HCT116 (cell line): ENCODE measurements at regions of chr1 and their contacts with region 1.

Region 1: GRCh38 chr1:218171285-218171893 is 113.7 kb upstream of the RRP15 start:
- DNase-seq: peak; percentile 24
- ATAC-seq: no peak
- H3K4me3 ChIP-seq: no peak overlapping the region
- H3K27ac ChIP-seq: no peak overlapping the region
- H3K4me1 ChIP-seq: no peaks in the 10 kb centered on the region
- H3K27me3 ChIP-seq: peaks cover 8% of the 10 kb centered on the region
- CTCF ChIP-seq: peak; percentile 57 to 85 (median 70); a peak in 5 of 6 replicates
- POLR2A ChIP-seq: no peak
- RAD21 ChIP-seq: peak; percentile 85

Region 2: DNA sequence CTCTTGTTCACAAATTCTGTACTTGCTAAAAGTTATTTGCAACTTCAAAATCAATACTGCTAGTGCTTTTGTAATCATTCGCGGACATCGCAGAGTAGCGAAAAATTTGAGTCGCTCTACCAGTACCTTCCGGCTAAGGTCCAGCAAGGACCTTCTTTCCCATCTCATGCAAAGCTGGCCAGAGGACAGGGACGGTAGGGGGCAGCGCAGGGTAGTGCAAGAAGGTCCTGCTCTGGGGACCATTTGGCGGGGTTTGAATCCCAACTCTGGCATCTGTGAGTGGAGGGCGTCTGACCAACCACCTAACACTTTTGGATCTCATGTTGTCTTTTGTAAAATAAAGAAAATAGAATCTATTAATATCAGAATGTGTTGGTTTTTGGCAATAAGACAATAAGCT is 282.0 kb before region 1 on chr1:
- CTCF ChIA-PET with region 1: interaction called, 4 read pairs
- POLR2A ChIA-PET with region 1: no interaction called
- RAD21 ChIA-PET with region 1: no interaction called
- intact Hi-C with region 1: loop called (anchors 1 kb)
- DNase-seq: no peak
- ATAC-seq: peak; percentile 40; the same call in 1 of the 2 replicates
- H3K4me3 ChIP-seq: no peak overlapping the region
- H3K27ac ChIP-seq: no peak overlapping the region
- H3K4me1 ChIP-seq: no peaks in the 10 kb centered on the region
- H3K27me3 ChIP-seq: peaks cover 10% of the 10 kb centered on the region; the same call in 1 of the 2 replicates
- CTCF ChIP-seq: peak; percentile 20 to 45 (median 43); a peak in 4 of 6 replicates
- POLR2A ChIP-seq: no peak
- RAD21 ChIP-seq: peak; percentile 46

Region 3: GRCh38 chr1:218123968-218124367 is 47.4 kb before region 1 on chr1:
- CTCF ChIA-PET with region 1: no interaction called
- POLR2A ChIA-PET with region 1: no interaction called
- RAD21 ChIA-PET with region 1: no interaction called
- intact Hi-C with region 1: no loop called
- DNase-seq: no peak
- ATAC-seq: no peak; the same call in 1 of the 2 replicates
- H3K4me3 ChIP-seq: no peak overlapping the region
- H3K27ac ChIP-seq: no peak overlapping the region
- H3K4me1 ChIP-seq: no peaks in the 10 kb centered on the region
- H3K27me3 ChIP-seq: no peaks in the 10 kb centered on the region
- CTCF ChIP-seq: no peak
- POLR2A ChIP-seq: no peak
- RAD21 ChIP-seq: no peak